Heart right ventricle (tissue), 16 donors: ENCODE measurements at regions of chr2 and their contacts with region 1.

Region 1: DNA sequence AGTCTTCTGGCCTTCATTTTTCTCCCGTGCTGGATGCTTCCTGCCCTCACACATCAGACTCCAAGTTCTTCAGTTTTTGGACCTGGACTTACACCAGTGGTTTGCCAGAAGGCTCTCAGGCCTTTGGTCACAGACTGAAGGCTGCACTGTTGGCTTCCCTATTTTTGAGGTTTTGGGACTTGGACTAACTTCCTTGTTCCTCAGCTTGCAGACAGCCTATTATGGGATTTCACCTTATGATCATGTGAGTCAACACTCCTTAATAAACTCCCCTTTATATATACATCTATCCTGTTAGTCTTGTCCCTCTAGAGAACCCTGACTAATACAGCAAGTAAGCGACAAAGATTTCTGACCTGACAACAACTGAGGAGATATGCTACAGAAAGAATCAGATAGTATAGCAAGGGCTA is 7.2 kb downstream of the CDC42EP3 start:
- DNase-seq: no peak
- ATAC-seq: peak in 1 of 8 donors; percentile 2
- H3K4me3 ChIP-seq: no peak overlapping the region
- H3K27ac ChIP-seq: peak overlapping the region in 6 of 10 donors; percentile 23 to 99 (median 77)
- H3K4me1 ChIP-seq: peaks cover 6 to 100% (median 96%) of the 10 kb centered on the region in 9 donors
- H3K27me3 ChIP-seq: no peaks in the 10 kb centered on the region
- CTCF ChIP-seq: no peak

Region 2: DNA sequence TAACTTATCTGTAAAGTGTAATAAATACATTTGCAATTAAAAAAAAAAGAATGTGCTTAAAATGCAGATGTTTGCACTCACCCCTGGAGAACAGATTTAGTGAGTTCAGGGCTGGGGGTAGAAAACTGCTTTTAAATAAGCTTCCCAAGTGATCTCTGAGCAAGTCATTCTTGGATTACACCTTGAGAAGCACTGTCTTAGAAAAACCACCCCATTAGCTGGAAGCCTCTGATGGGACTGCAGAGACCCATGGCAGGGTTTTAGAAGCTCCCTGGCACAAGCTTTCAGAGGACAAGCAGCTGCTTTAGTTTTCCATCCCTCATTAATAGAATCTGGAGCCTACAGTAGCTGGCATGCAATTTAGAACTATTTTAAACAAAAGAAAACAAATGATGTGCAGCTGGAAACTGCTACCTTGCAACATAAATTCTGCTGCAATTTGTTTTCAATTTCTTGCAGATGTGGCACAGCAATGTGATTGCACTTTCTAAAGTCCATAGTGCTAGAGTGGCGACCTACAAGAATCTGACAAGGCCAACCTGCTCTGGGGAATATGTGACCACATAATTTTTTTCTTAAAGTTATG is 134.3 kb before region 1 on chr2:
- intact Hi-C with region 1: loop called in 1 of 10 experiments (anchors 10 kb)
- DNase-seq: no peak
- ATAC-seq: no peak
- H3K4me3 ChIP-seq: no peak overlapping the region
- H3K27ac ChIP-seq: no peak overlapping the region
- H3K4me1 ChIP-seq: peaks cover 0 to 16% (median 4%) of the 10 kb centered on the region in 9 donors
- H3K27me3 ChIP-seq: no peaks in the 10 kb centered on the region
- CTCF ChIP-seq: no peak

Region 3: DNA sequence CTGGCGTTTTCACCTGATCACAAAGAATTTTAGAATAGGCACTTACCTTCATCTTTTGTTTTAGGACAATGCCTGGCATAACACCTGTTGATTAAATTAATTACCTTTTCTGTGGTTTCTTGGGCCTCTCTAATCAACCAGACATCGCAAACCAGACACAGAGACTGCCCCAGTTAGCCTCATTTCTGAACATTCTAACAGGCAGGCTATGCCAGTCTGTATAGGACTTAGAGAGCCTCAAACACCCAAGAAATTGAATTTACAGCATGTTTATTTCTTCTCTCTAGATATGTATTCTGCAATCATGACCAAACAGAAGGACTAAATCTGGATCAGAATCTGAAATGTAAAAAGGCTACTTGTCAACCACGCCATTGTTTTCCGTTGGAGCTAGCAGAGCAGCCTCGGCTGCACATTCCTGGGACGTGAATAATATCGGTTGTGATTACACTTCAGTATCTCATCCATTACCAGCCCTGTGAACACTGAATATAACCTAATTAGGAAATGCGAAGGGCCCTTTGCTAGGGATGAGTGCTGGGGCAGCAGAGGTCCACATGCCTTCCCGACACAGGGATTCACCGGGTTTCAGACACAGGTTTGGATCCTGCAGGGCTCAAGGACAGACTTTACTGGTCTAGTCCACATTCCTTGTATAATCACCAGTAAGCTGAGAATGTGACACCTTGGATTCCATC is 24.7 kb after region 1 on chr2:
- intact Hi-C with region 1: no loop called
- DNase-seq: no peak
- ATAC-seq: peak; percentile 61 to 91 (median 73)
- H3K4me3 ChIP-seq: no peak overlapping the region
- H3K27ac ChIP-seq: peak overlapping the region in 8 of 10 donors; percentile 22 to 64 (median 51)
- H3K4me1 ChIP-seq: peaks cover 0 to 17% (median 7%) of the 10 kb centered on the region in 9 donors
- H3K27me3 ChIP-seq: no peaks in the 10 kb centered on the region
- CTCF ChIP-seq: no peak

Region 4: GRCh38 chr2:37698931-37699481 is 34.8 kb after region 1 on chr2:
- intact Hi-C with region 1: no loop called
- DNase-seq: no peak
- ATAC-seq: peak in 1 of 8 donors; percentile 42
- H3K4me3 ChIP-seq: no peak overlapping the region
- H3K27ac ChIP-seq: no peak overlapping the region
- H3K4me1 ChIP-seq: no peaks in the 10 kb centered on the region
- H3K27me3 ChIP-seq: no peaks in the 10 kb centered on the region
- CTCF ChIP-seq: no peak